Left ventricle myocardium inferior (tissue), 1 donor: ENCODE measurements at regions of chr5 and their contacts with region 1.

Region 1: DNA sequence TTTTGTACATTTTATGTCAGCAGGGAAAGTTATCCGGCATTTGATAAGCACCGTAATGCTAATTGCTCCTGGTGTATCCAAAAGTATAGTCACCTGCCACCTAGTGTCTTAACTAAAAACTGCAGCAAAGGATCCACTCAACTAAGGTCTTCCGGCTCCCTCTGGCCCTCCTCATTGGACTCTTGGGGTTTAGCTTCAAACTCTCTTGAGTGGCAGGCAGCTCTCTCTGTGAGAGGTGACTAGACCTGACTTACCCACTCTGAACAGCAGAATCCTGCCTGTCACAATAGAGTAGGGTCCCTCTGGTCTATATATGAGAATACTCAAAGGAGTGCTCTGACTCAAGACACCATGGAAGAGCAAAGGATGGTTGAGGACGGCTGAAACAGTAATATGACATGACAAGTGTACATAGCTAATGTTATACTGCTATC is 60.3 kb upstream of the CAST start:
- DNase-seq: no peak
- H3K4me3 ChIP-seq: no peak overlapping the region
- H3K27ac ChIP-seq: no peak overlapping the region
- H3K4me1 ChIP-seq: no peaks in the 10 kb centered on the region
- H3K27me3 ChIP-seq: no peaks in the 10 kb centered on the region
- CTCF ChIP-seq: peak; percentile 89

Region 2: GRCh38 chr5:95858661-95859326 is 743.0 kb before region 1 on chr5:
- intact Hi-C with region 1: loop called (anchors 10 kb)
- DNase-seq: peak; percentile 84
- H3K4me3 ChIP-seq: peak overlapping the region; percentile 48
- H3K27ac ChIP-seq: peak overlapping the region; percentile 96
- H3K4me1 ChIP-seq: peaks cover 74% of the 10 kb centered on the region
- H3K27me3 ChIP-seq: no peaks in the 10 kb centered on the region
- CTCF ChIP-seq: peak; percentile 100

Region 3: GRCh38 chr5:96344678-96345577 is 256.9 kb before region 1 on chr5:
- intact Hi-C with region 1: loop called (anchors 5 kb)
- DNase-seq: no peak
- H3K4me3 ChIP-seq: no peak overlapping the region
- H3K27ac ChIP-seq: no peak overlapping the region
- H3K4me1 ChIP-seq: peaks cover 4% of the 10 kb centered on the region
- H3K27me3 ChIP-seq: no peaks in the 10 kb centered on the region
- CTCF ChIP-seq: peak; percentile 67

Region 4: DNA sequence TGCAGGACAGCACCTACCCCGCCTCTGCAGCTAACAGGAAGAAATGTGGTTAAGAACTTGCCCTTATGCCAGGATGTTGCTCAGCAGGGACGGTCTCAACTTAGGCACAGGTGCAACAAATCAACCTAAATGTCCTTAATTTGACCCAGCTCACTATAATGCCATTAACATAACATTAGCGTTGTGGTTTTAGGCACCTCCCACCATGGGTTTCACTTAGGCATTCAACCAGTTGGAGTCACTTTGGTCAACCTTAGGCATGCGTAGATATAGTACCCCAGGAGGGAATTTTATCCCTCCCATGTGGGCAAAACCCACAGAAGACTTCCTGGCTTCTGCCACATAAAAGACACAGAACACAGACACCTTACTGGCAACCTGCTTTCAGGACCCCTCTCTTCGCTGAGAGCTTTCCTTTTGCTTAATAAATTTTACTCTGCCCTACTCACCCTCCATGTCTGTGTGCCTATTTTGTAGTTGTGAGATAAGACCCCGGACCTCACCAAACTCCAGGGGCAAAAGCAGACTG is 214.6 kb after region 1 on chr5:
- intact Hi-C with region 1: no loop called
- DNase-seq: no peak
- H3K4me3 ChIP-seq: no peak overlapping the region
- H3K27ac ChIP-seq: no peak overlapping the region
- H3K4me1 ChIP-seq: peaks cover 3% of the 10 kb centered on the region
- H3K27me3 ChIP-seq: no peaks in the 10 kb centered on the region
- CTCF ChIP-seq: no peak